PC-9 (cell line): ENCODE measurements at regions of chr20 and their contacts with region 1.

Region 1: GRCh38 chr20:35837577-35838198 is 65.9 kb downstream of the PHF20 start:
- DNase-seq: no peak
- H3K4me3 ChIP-seq: no peak overlapping the region
- H3K27ac ChIP-seq: no peak overlapping the region
- H3K4me1 ChIP-seq: no peaks in the 10 kb centered on the region
- H3K27me3 ChIP-seq: no peaks in the 10 kb centered on the region
- CTCF ChIP-seq: no peak

Region 2: GRCh38 chr20:34143951-34144350 is 1693.7 kb before region 1 on chr20:
- CTCF ChIA-PET with region 1: no interaction called
- POLR2A ChIA-PET with region 1: interaction called, 12 read pairs
- intact Hi-C with region 1: no loop called
- DNase-seq: no peak
- H3K4me3 ChIP-seq: no peak overlapping the region
- H3K27ac ChIP-seq: no peak overlapping the region
- H3K4me1 ChIP-seq: no peaks in the 10 kb centered on the region
- H3K27me3 ChIP-seq: no peaks in the 10 kb centered on the region
- CTCF ChIP-seq: no peak